Left colon (tissue), 2 donors: ENCODE measurements at regions of chr5 and their contacts with region 1.

Region 1: GRCh38 chr5:80308526-80308925 is 11.3 kb upstream of the SPZ1 start:
- DNase-seq: no peak
- ATAC-seq: no peak

Region 2: DNA sequence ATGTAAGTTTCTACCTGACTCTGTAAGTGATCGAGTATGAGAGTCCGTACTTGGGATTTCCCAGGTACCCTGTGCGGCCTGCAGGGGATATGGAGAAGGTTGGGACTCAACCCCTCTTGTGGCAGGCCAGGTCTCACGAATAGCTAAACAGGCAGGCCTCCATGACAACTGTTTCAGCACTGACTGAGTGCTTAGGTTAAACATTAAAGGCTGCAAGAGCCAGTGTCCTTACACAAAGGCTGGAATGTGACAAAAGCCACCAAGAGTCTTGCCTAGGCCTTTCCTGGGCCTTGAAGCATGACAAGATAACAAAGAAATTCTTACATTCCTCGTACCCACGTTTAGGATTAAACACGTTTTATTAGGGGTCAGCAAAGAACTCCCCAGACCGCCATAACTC is 214.7 kb before region 1 on chr5:
- intact Hi-C with region 1: loop called in 1 of 2 experiments (anchors 2 kb)
- DNase-seq: no peak
- ATAC-seq: no peak